CD8-positive, alpha-beta T cell (primary cell): ENCODE measurements at regions of chr13 and their contacts with region 1.

Region 1: DNA sequence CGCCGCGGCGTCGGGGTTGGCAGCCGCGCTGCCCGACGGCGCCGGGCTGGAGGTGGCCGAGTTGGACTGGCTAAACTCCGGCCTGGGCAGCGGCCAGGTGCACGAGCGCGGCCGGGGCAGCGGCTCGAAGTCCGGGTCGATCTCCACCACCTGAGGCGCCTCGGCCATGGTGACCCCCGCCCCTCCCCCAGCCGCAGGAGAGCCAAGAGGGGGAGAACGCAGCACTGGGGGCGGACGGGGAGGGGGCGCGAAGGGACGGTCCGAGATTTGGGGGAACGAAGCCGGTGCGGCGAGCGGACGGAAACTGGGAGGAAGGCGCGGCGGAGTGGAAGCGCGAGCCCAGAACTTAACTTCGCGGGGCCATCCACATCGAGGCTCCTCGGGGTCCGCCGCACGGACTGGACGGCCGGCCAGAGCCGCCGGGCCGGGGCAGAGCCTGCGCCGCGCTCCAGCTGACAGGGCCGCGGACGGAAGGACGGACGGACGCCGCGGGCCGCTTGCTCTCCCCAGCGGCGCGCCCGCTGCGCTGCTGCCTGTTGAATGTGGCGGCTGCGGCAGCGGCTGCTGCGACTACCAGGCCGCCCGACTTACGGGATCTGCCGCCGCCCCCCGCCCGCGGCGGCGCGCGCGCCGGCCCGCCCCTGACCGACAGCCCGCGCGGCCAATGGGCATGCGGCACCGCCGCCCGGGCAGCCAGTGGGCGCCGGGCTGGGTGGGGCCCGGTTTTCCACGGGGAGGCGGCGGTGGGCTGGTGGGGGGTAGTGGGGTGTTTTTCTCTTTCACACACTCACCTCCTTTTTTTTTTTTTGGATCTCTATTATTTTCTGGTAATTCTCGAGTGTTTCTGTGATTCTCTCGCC is at the start of gene FOXO1:
- DNase-seq: peak; percentile 83 to 95 (median 91)
- ATAC-seq: peak; percentile 77
- H3K4me3 ChIP-seq: peak within 1 kb of the TSS; percentile 88 to 96
- H3K4me3 Mint-ChIP-seq: peak within 1 kb of the TSS; percentile 93
- H3K27ac ChIP-seq: peak within 1 kb of the TSS; percentile 75 to 83
- H3K27ac Mint-ChIP-seq: peak within 1 kb of the TSS; percentile 96
- H3K4me1 ChIP-seq: peaks cover 28% of the 10 kb centered on the region
- H3K4me1 Mint-ChIP-seq: peaks cover 40% of the 10 kb centered on the region
- H3K27me3 ChIP-seq: no peaks in the 10 kb centered on the region
- H3K27me3 Mint-ChIP-seq: no peaks in the 10 kb centered on the region
- CTCF ChIP-seq: no peak
- total RNA-seq, gene FOXO1: 97.2 to 97.3 TPM

Region 2: GRCh38 chr13:40069173-40070044 is 596.9 kb before region 1 on chr13:
- CTCF ChIA-PET with region 1: interaction called, 19 read pairs
- POLR2A ChIA-PET with region 1: interaction called, 4 read pairs
- intact Hi-C with region 1: loop called in 1 of 2 experiments (anchors 5 kb)
- DNase-seq: peak; percentile 47 to 86 (median 77)
- ATAC-seq: peak; percentile 96
- H3K4me3 ChIP-seq: no peak overlapping the region
- H3K4me3 Mint-ChIP-seq: peak overlapping the region; percentile 59
- H3K27ac ChIP-seq: no peak overlapping the region
- H3K27ac Mint-ChIP-seq: peak overlapping the region; percentile 53
- H3K4me1 ChIP-seq: peaks cover 20% of the 10 kb centered on the region
- H3K4me1 Mint-ChIP-seq: peaks cover 29% of the 10 kb centered on the region
- H3K27me3 ChIP-seq: no peaks in the 10 kb centered on the region
- H3K27me3 Mint-ChIP-seq: no peaks in the 10 kb centered on the region
- CTCF ChIP-seq: peak; percentile 90

Region 3: GRCh38 chr13:40221460-40222201 is 444.6 kb before region 1 on chr13:
- CTCF ChIA-PET with region 1: no interaction called
- POLR2A ChIA-PET with region 1: no interaction called
- intact Hi-C with region 1: loop called in 1 of 2 experiments (anchors 5 kb)
- DNase-seq: peak in 6 of 9 experiments; percentile 8 to 87 (median 49)
- ATAC-seq: peak; percentile 79
- H3K4me3 ChIP-seq: peak overlapping the region in 1 of 2 experiments; percentile 14
- H3K4me3 Mint-ChIP-seq: peak overlapping the region; percentile 67
- H3K27ac ChIP-seq: peak overlapping the region; percentile 6 to 70
- H3K27ac Mint-ChIP-seq: peak overlapping the region; percentile 88
- H3K4me1 ChIP-seq: peaks cover 31% of the 10 kb centered on the region
- H3K4me1 Mint-ChIP-seq: peaks cover 59% of the 10 kb centered on the region
- H3K27me3 ChIP-seq: no peaks in the 10 kb centered on the region
- H3K27me3 Mint-ChIP-seq: no peaks in the 10 kb centered on the region
- CTCF ChIP-seq: no peak

Region 4: GRCh38 chr13:40494513-40494912 is 171.8 kb before region 1 on chr13:
- CTCF ChIA-PET with region 1: interaction called, 5 read pairs
- POLR2A ChIA-PET with region 1: interaction called, 21 read pairs
- intact Hi-C with region 1: loop called (anchors 2 to 5 kb)
- DNase-seq: peak in 2 of 9 experiments; percentile 45 to 70
- ATAC-seq: peak; percentile 53
- H3K4me3 ChIP-seq: peak overlapping the region; percentile 19 to 29
- H3K4me3 Mint-ChIP-seq: peak overlapping the region; percentile 78
- H3K27ac ChIP-seq: peak overlapping the region; percentile 36 to 56
- H3K27ac Mint-ChIP-seq: peak overlapping the region; percentile 97
- H3K4me1 ChIP-seq: peaks cover 78% of the 10 kb centered on the region
- H3K4me1 Mint-ChIP-seq: peaks cover 88% of the 10 kb centered on the region
- H3K27me3 ChIP-seq: no peaks in the 10 kb centered on the region
- H3K27me3 Mint-ChIP-seq: no peaks in the 10 kb centered on the region
- CTCF ChIP-seq: no peak

Region 5: GRCh38 chr13:40613192-40613818 is 53.0 kb before region 1 on chr13:
- CTCF ChIA-PET with region 1: interaction called, 5 read pairs
- POLR2A ChIA-PET with region 1: interaction called, 5 read pairs
- intact Hi-C with region 1: loop called (anchors 2 to 5 kb)
- DNase-seq: peak; percentile 25 to 89 (median 60)
- ATAC-seq: peak; percentile 84
- H3K4me3 ChIP-seq: peak overlapping the region; percentile 21
- H3K4me3 Mint-ChIP-seq: peak overlapping the region; percentile 79
- H3K27ac ChIP-seq: peak overlapping the region; percentile 77 to 96
- H3K27ac Mint-ChIP-seq: peak overlapping the region; percentile 92
- H3K4me1 ChIP-seq: peaks cover 97% of the 10 kb centered on the region
- H3K4me1 Mint-ChIP-seq: peaks cover 95% of the 10 kb centered on the region
- H3K27me3 ChIP-seq: no peaks in the 10 kb centered on the region
- H3K27me3 Mint-ChIP-seq: no peaks in the 10 kb centered on the region
- CTCF ChIP-seq: no peak

Region 6: GRCh38 chr13:40682449-40683240 is 16.4 kb after region 1 on chr13:
- CTCF ChIA-PET with region 1: interaction called, 21 read pairs
- POLR2A ChIA-PET with region 1: interaction called, 4 read pairs
- intact Hi-C with region 1: loop called in 1 of 2 experiments (anchors 1 kb)
- DNase-seq: peak in 2 of 9 experiments; percentile 27 to 51
- ATAC-seq: peak; percentile 48
- H3K4me3 ChIP-seq: no peak overlapping the region
- H3K4me3 Mint-ChIP-seq: no peak overlapping the region
- H3K27ac ChIP-seq: no peak overlapping the region
- H3K27ac Mint-ChIP-seq: peak overlapping the region; percentile 6
- H3K4me1 ChIP-seq: peaks cover 6% of the 10 kb centered on the region
- H3K4me1 Mint-ChIP-seq: peaks cover 9% of the 10 kb centered on the region
- H3K27me3 ChIP-seq: no peaks in the 10 kb centered on the region
- H3K27me3 Mint-ChIP-seq: no peaks in the 10 kb centered on the region
- CTCF ChIP-seq: peak; percentile 87